HEK293T (cell line): ENCODE measurements at regions of chrX and their contacts with region 1.

Region 1: DNA sequence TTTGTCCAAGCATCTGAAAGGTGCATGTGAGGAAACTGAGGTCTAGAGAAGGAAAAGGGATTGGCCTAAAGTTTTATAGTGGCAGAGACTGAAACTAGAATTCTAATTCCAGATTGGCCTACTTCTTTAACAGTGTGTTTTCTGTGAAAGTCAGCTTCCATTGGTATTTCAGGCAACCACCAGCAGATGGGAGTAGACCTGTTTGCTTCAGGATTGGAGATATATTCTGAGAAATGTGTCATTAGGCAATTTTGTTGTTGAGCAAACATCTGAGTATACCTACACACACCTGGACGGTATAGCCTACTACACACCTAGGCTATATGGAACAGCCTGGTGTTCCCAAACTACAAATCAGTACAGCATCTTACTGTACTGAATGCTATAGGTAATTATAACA is 207.3 kb upstream of the RADX start:
- DNase-seq: no peak

Region 2: DNA sequence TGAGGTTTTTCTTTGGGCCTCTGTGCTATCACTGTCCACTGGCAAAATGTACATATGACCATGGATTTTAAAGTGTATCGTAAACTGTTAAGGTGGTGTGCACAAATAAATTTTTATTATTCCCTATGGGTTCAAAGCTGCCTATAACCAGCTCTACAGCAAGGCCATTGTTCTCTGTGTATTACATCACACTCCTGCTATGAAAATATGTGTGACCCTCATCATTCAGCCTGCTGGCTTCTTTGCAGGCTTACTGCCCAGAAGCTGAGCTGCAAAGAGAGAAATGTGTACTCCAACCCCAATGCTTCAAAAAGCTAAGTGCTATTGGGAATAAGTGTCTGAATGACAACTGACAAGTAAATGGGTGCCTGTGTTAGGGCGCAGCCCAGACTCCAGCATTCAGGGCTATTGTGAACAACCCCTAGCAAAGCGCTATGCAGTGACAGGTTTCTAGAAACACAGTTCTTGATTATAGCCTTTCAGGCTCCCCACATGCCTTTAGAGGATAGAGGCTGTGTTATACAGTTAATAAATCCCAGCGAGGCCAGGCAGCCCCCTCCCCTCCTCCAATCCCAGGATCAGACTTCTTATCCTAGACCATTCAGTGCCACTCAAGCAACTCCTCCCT is 13.1 kb before region 1 on chrX:
- CTCF ChIA-PET with region 1: no interaction called
- POLR2A ChIA-PET with region 1: no interaction called
- DNase-seq: no peak

Region 3: DNA sequence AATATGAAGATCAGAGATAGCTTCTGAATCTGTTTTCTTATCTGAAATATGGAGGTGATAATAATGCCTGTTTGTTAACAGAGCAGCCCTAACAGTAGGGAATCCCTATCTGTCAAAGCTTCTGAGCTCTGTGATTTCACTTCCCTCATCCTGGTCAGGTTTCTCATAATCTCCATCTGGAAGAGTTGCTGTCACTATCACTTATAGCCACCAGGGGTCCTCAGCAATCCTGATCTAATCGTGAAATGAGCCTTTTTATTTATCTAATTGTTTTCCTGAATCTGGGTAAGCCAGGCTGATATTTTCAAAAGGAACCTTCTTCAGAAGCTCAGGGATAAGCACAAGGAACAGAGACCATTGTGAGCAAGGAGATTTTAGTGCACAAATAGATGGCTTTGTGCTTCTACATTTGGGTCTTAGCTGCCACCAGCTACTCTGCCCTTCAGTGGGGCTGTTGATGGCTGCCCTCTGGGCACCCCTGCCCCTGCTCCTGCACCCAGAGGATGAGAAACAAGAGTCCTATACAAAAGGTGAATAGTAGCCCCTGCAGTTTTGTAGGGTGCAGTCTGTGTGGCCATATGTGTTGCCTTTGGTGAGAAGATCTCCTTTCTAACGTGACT is 10.9 kb after region 1 on chrX:
- CTCF ChIA-PET with region 1: interaction called, 16 read pairs
- POLR2A ChIA-PET with region 1: no interaction called
- DNase-seq: peak; percentile 60